ENCODE measurements at regions of chrX and their contacts with region 1.

Region 1: DNA sequence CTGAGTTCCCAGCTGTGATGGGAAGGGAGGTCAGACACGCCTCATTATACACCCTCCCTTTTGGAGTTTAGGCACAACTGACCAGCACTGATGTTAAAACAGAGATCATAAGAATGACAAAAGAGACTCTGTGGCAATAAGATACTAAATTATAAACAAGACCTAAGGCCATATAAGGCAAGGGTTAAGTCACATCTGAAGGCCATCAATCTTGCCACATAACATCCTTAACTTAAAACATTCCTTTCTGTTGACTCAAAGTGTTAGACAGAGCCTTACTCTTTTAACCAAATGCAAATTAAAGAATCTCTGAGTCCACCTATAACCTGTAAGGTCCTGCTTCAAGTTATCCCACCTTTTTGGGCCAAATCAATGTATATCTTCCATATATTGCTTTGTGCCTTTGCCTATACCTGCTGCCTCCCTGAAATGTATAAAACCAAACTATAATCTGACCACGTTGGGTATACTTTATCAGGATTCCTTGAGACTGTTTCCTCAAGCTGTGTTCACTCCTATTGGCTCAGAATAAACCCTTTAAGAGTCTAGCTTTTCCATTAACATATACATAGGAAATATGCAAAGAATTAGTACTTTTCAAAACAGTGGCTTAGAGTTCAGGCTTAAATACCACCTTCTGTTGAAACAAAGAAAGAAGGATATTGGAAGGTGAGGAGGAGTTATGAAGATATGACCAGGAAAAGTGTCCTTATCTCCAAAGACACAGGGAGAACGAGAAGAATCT is 214.4 kb upstream of the PPP1R2C start:
- DNase-seq: peak in 1 of 2 experiments; percentile 78
- H3K4me3 ChIP-seq: no peak overlapping the region
- H3K27ac ChIP-seq: peak overlapping the region; percentile 67
- H3K4me1 ChIP-seq: peaks cover 11% of the 10 kb centered on the region
- H3K27me3 ChIP-seq: no peaks in the 10 kb centered on the region
- CTCF ChIP-seq: no peak

Region 2: GRCh38 chrX:42495139-42495538 is 497.2 kb before region 1 on chrX:
- CTCF ChIA-PET with region 1: interaction called, 10 read pairs
- POLR2A ChIA-PET with region 1: no interaction called
- intact Hi-C with region 1: no loop called
- DNase-seq: peak in 1 of 2 experiments; percentile 0
- H3K4me3 ChIP-seq: no peak overlapping the region
- H3K27ac ChIP-seq: no peak overlapping the region
- H3K4me1 ChIP-seq: no peaks in the 10 kb centered on the region
- H3K27me3 ChIP-seq: no peaks in the 10 kb centered on the region
- CTCF ChIP-seq: no peak

Measured in PC-9 (cell line).